ENCODE measurements at regions of chr17 and their contacts with region 1.

Region 1: GRCh38 chr17:4420692-4421131 is 13.0 kb upstream of the SPNS3 start:
- DNase-seq: no peak
- ATAC-seq: peak; percentile 94

Region 2: GRCh38 chr17:4536259-4536741 is 115.6 kb after region 1 on chr17:
- intact Hi-C with region 1: loop called (anchors 5 kb)
- DNase-seq: peak; percentile 48
- ATAC-seq: peak; percentile 20

Region 3: GRCh38 chr17:4554997-4555799 is 134.5 kb after region 1 on chr17 and contains the start of gene MYBBP1A:
- intact Hi-C with region 1: loop called (anchors 5 kb)
- DNase-seq: peak; percentile 99
- ATAC-seq: peak; percentile 97
- total RNA-seq, gene MYBBP1A: 18.8 TPM

Region 4: DNA sequence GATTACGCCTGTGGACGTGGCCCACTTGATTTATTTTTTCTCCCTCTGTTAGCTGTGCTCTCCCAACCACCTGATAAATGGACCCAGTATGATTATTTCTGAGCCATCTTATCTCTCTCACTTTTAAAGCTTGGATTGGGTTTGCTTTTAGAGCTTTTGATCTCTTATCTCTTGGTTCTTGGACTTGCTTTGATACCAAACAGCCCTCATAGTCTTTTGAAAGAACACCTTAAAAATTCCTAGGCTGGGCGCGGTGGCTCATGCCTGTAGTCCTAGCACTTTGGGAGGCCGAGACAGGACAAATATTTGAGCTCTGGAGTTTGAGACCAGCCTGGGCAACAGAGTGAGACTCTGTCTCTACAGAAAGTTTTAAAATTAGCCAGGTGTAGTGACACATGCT is 189.4 kb after region 1 on chr17:
- intact Hi-C with region 1: no loop called
- DNase-seq: no peak
- ATAC-seq: no peak

Region 5: GRCh38 chr17:4625181-4625617 is 204.5 kb after region 1 on chr17:
- intact Hi-C with region 1: loop called (anchors 5 kb)
- DNase-seq: no peak
- ATAC-seq: peak; percentile 75

Measured in Right ventricle myocardium superior (tissue), 1 donor.